Activated CD8-positive, alpha-beta T cell treated with anti-CD3 and anti-CD28 coated beads, Interleukin-2, amount 10 ng/mL, durations not matched to agents 7 days and 5 days (primary cell): ENCODE measurements at regions of chr17 and their contacts with region 1.

Region 1: DNA sequence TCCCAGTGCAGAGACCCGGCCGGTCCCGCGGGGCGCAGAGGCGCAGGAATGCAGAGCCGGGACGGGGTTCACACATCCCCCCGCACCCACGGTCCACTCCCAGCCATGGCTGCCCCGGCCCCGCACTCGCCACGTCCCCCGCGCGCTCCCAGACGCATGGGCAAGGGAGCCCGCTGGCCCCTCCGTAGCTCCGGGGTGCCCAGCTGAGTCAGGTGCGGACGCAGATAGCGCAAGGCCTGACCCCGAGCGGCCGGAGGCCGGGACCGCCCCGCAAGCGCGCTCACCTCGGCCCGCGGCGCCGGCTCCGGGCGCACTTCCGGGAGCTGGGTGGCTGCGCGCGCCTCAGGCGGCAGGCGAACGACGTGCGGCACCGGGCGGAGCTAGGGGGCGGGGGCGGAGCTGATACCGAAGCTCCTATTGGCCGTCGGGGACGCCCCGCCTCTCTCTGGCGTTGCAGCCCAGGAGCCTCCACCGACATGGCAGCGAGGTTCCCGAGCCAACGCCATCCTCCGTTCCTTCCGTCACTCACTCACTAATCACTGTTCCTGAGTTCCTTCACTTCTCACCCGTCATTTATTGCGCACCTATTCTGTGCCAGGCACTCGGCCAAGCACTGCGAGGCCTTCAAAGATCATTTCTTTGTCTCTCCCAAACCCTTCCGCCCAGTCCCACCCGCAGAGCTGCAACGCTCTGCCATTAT is at the start of gene ZNF18:
- DNase-seq: peak; percentile 97
- ATAC-seq: peak; percentile 98
- H3K4me3 Mint-ChIP-seq: peak within 1 kb of the TSS; percentile 97
- H3K27ac Mint-ChIP-seq: peak within 1 kb of the TSS; percentile 98
- H3K4me1 Mint-ChIP-seq: peaks cover 16% of the 10 kb centered on the region
- H3K27me3 Mint-ChIP-seq: no peaks in the 10 kb centered on the region
- total RNA-seq, gene ZNF18: 11.7 to 13.7 TPM

Region 2: DNA sequence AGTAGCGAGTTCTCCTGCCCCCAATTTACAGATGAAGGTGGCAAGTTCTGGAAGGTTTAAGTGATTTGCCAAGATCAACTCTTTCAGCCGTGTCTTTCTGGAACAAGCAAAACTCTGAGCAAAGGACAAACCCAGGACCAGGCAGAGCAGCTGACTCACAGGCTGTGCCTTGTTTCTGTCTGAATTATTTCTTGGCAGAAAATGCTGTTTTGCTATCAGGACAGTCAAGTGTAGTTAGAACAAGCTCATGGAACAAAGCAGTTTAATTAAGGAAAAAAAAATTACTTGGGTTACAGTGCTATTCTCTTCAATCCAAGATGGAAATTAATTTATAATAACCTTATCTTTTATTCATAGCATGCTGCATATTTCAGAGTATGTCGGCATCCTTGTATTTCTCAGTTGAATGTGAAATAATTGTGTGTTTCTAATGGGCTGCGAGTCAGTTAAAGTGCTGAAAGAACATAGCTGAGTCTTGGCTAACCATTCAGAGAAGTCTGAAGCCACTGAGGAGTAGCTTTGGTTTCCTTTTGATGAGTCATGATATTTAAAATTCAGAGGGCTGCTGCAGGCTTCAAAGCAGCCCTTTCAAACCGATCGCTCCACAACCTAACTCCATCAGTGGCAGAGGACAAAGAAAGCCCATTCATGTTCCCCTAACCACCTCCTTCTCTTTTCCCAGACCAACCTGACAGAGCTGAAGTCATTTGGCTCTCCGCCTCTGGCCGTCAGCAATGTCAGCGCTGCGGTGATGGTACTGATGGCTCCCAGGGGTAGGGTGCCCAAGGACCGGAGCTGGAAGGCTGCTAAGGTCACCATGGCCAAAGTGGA is 143.8 kb before region 1 on chr17:
- CTCF ChIA-PET with region 1: no interaction called
- POLR2A ChIA-PET with region 1: no interaction called
- DNase-seq: no peak
- ATAC-seq: no peak
- H3K4me3 Mint-ChIP-seq: no peak overlapping the region
- H3K27ac Mint-ChIP-seq: no peak overlapping the region
- H3K4me1 Mint-ChIP-seq: no peaks in the 10 kb centered on the region
- H3K27me3 Mint-ChIP-seq: no peaks in the 10 kb centered on the region

Region 3: GRCh38 chr17:11880714-11881113 is 116.6 kb before region 1 on chr17:
- CTCF ChIA-PET with region 1: no interaction called
- POLR2A ChIA-PET with region 1: no interaction called
- DNase-seq: no peak
- ATAC-seq: no peak
- H3K4me3 Mint-ChIP-seq: no peak overlapping the region
- H3K27ac Mint-ChIP-seq: no peak overlapping the region
- H3K4me1 Mint-ChIP-seq: no peaks in the 10 kb centered on the region
- H3K27me3 Mint-ChIP-seq: no peaks in the 10 kb centered on the region

Region 4: GRCh38 chr17:11979795-11980194 is 17.5 kb before region 1 on chr17:
- CTCF ChIA-PET with region 1: no interaction called
- POLR2A ChIA-PET with region 1: interaction called, 25 read pairs
- DNase-seq: no peak
- ATAC-seq: no peak
- H3K4me3 Mint-ChIP-seq: no peak overlapping the region
- H3K27ac Mint-ChIP-seq: no peak overlapping the region
- H3K4me1 Mint-ChIP-seq: no peaks in the 10 kb centered on the region
- H3K27me3 Mint-ChIP-seq: no peaks in the 10 kb centered on the region

Region 5: DNA sequence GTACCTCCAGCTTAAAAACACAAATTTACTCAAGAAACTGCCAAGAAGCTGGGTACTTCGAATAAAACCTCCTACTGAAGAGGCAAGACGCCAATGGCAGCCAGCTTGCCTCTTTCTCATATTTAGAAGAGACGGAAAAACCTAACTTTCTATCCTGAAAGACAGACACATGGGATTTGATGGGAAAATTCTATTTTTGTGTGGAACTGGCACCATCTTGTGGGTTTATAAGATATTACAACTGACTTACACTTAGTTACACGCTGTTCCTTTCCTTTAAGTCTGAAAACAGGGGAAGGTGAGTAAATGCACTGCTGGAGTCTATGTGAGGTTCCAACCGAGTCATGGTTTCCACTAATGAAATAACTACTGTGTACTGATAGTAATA is 10.4 kb before region 1 on chr17:
- CTCF ChIA-PET with region 1: interaction called, 8 read pairs
- POLR2A ChIA-PET with region 1: interaction called, 25 read pairs
- DNase-seq: no peak
- ATAC-seq: no peak
- H3K4me3 Mint-ChIP-seq: no peak overlapping the region
- H3K27ac Mint-ChIP-seq: no peak overlapping the region
- H3K4me1 Mint-ChIP-seq: peaks cover 2% of the 10 kb centered on the region
- H3K27me3 Mint-ChIP-seq: no peaks in the 10 kb centered on the region

Region 6: GRCh38 chr17:12007466-12007865 is 10.2 kb after region 1 on chr17:
- CTCF ChIA-PET with region 1: interaction called, 3 read pairs
- POLR2A ChIA-PET with region 1: interaction called, 22 read pairs
- DNase-seq: no peak
- ATAC-seq: no peak
- H3K4me3 Mint-ChIP-seq: no peak overlapping the region
- H3K27ac Mint-ChIP-seq: no peak overlapping the region
- H3K4me1 Mint-ChIP-seq: peaks cover 4% of the 10 kb centered on the region
- H3K27me3 Mint-ChIP-seq: peaks cover 11% of the 10 kb centered on the region

Region 7: GRCh38 chr17:12020642-12021622 is 23.6 kb after region 1 on chr17 and contains the start of gene MAP2K4:
- CTCF ChIA-PET with region 1: interaction called, 4 read pairs
- POLR2A ChIA-PET with region 1: interaction called, 128 read pairs
- DNase-seq: peak; percentile 92
- ATAC-seq: peak; percentile 96
- H3K4me3 Mint-ChIP-seq: peak within 1 kb of the TSS; percentile 80
- H3K27ac Mint-ChIP-seq: peak within 1 kb of the TSS; percentile 69
- H3K4me1 Mint-ChIP-seq: peaks cover 43% of the 10 kb centered on the region
- H3K27me3 Mint-ChIP-seq: peaks cover 6% of the 10 kb centered on the region
- total RNA-seq, gene MAP2K4: 43.2 to 45.3 TPM

Region 8: DNA sequence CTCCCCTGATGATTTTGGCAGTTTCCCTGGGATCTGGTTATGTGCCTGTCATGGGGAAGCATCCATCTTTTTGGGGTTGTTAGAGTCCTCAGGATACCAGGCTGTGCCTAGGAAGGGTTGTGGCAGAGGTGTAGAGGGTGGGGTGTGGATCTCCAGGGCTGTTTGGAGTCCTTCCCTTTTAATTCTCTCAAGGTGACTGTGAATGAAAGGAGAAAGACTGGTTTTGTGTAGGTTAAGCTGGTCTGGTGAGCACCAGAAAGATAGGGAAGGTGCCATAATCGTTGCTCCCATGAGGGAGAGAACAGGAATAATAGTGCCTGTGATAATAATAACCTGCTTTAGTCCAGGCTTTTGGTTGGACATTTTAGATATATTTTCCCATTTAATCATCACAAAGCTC is 30.4 kb after region 1 on chr17:
- CTCF ChIA-PET with region 1: no interaction called
- POLR2A ChIA-PET with region 1: interaction called, 128 read pairs
- DNase-seq: no peak
- ATAC-seq: no peak
- H3K4me3 Mint-ChIP-seq: no peak overlapping the region
- H3K27ac Mint-ChIP-seq: no peak overlapping the region
- H3K4me1 Mint-ChIP-seq: peaks cover 46% of the 10 kb centered on the region
- H3K27me3 Mint-ChIP-seq: no peaks in the 10 kb centered on the region

Region 9: DNA sequence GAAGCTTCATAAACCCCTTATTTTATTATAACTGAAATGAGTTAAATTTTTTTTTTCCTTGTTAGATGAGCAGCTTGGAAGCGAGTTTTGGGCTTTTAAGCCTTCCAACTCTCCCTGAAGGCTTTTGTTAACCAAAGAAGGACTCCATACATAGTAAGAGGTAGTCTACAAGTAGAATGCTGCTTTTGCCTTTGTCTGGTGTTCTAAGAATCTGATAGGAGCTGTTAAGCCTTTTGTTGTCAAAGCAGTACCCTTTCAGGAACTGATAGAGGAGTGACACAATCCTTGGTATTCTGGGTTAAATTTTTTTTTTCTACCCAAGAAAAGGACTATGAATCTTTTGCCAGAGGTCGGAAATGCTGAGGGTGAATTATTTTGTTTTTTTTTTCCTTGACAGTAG is 49.5 kb after region 1 on chr17:
- CTCF ChIA-PET with region 1: no interaction called
- POLR2A ChIA-PET with region 1: interaction called, 13 read pairs
- DNase-seq: no peak
- ATAC-seq: no peak
- H3K4me3 Mint-ChIP-seq: no peak overlapping the region
- H3K27ac Mint-ChIP-seq: no peak overlapping the region
- H3K4me1 Mint-ChIP-seq: peaks cover 30% of the 10 kb centered on the region
- H3K27me3 Mint-ChIP-seq: no peaks in the 10 kb centered on the region

Region 10: DNA sequence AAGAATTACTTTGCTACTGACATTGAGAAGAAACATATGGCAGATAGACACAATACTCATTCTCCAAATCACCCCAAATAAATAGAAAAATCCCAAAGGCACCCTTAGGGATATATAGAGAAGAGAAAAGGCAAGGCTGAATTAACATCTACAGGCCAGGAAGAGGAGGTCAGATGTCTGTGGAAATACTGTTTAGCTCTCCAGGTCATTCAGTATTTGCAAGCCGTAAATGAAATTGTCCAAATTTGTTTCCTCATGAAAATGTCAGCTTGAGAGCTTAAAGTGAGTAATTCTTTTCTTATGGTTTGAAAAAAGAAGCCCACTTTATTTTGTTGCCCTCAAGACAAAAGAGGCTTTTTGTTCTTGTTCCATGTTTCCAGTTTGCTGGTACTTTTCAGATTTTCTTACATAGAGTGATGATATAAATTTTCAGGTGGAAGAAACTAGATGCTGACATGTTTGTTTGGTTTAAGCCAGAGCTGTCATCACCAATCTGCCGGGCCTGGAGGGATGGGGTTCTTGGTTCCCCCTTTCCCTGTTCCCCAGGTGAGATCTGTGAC is 212.4 kb after region 1 on chr17:
- CTCF ChIA-PET with region 1: no interaction called
- POLR2A ChIA-PET with region 1: no interaction called
- DNase-seq: no peak
- ATAC-seq: no peak
- H3K4me3 Mint-ChIP-seq: no peak overlapping the region
- H3K27ac Mint-ChIP-seq: no peak overlapping the region
- H3K4me1 Mint-ChIP-seq: no peaks in the 10 kb centered on the region
- H3K27me3 Mint-ChIP-seq: no peaks in the 10 kb centered on the region